PC-9 (cell line): ENCODE measurements at regions of chr6 and their contacts with region 1.

Region 1: DNA sequence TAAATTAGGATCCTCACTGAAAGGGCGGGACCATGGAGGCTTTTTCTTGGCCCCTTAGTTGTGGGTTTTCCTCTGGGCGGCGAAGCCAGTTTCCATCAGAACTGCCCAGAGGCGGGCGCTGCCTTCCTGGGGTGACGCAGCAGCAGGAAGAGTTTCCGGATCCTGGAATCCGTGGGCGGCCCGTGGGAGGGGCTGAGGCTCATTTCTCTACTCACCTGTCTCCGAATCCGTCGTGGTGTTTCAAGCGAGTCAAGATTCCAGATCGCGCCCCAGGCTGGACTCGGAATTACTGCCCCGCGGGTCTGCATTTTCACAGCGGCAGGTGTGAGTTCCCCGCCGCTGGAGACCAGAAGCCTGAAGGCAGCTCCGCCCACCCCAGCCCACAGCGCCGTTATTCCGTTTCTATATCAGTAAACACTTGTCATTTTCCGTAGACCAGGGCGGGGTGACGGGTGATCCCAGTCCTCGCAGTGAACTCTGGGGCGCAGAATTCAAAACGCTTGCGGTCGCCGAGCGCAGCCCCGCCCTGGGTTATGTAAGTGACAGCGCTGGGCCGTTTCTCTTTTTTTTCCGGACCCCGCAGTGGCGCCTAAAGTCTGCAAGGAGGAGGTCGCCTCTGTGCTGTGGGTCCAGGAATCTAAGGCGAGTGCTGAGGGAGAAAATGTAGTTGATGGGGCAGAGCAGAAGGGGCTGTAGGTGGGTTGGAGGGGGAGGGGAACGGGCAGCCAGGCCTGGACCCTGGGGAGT is 27.2 kb upstream of the POU5F1 start:
- DNase-seq: peak; percentile 82 to 88
- H3K4me3 ChIP-seq: peak overlapping the region; percentile 54
- H3K27ac ChIP-seq: peak overlapping the region; percentile 79
- H3K4me1 ChIP-seq: peaks cover 19% of the 10 kb centered on the region
- H3K27me3 ChIP-seq: no peaks in the 10 kb centered on the region
- CTCF ChIP-seq: no peak

Region 2: DNA sequence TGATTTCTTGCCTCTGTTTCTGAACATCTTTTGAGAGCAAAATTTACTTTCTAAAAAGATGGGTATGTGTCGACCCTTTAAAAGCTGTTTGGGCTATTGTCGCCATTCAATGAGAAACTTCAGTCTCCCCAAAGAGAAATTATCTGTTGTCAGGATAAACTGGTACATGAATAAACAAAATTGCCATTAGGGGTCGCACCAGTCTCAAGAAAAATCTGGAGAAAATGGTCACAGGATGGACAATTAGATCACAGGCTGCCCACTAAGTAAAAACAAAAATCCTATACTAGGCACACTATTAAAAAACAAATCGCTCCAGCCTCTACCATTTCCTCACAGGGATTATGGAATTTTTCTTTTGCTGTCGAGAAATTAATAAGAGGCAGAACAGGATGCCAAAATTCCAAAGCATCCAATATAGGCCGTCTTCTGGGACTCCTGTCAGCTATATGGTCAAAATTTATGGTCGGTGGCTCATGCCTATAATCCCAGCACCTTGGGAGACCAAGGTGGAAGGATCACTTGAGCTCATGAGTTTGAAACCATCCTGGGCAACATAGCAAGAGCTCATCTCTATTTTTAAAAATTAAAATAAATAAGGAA is 714.0 kb before region 1 on chr6:
- CTCF ChIA-PET with region 1: no interaction called
- POLR2A ChIA-PET with region 1: no interaction called
- intact Hi-C with region 1: loop called (anchors 5 kb)
- DNase-seq: peak; percentile 45 to 56
- H3K4me3 ChIP-seq: no peak overlapping the region
- H3K27ac ChIP-seq: no peak overlapping the region
- H3K4me1 ChIP-seq: no peaks in the 10 kb centered on the region; the same call in 1 of the 2 replicates
- H3K27me3 ChIP-seq: peaks cover 30% of the 10 kb centered on the region
- CTCF ChIP-seq: peak; percentile 74

Region 3: GRCh38 chr6:31068669-31069340 is 128.9 kb before region 1 on chr6:
- CTCF ChIA-PET with region 1: interaction called, 10 read pairs
- POLR2A ChIA-PET with region 1: no interaction called
- intact Hi-C with region 1: no loop called
- DNase-seq: peak; percentile 61 to 80
- H3K4me3 ChIP-seq: no peak overlapping the region
- H3K27ac ChIP-seq: no peak overlapping the region
- H3K4me1 ChIP-seq: peaks cover 3% of the 10 kb centered on the region; the same call in 1 of the 2 replicates
- H3K27me3 ChIP-seq: no peaks in the 10 kb centered on the region
- CTCF ChIP-seq: peak; percentile 94

Region 4: GRCh38 chr6:31158140-31158862 is 39.4 kb before region 1 on chr6 and contains the start of gene TCF19:
- CTCF ChIA-PET with region 1: interaction called, 3 read pairs
- POLR2A ChIA-PET with region 1: interaction called, 4 read pairs
- intact Hi-C with region 1: loop called (anchors 2 kb)
- DNase-seq: peak; percentile 96 to 100
- H3K4me3 ChIP-seq: peak within 1 kb of the TSS; percentile 89
- H3K27ac ChIP-seq: no peak within 1 kb of the TSS
- H3K4me1 ChIP-seq: peaks cover 16% of the 10 kb centered on the region
- H3K27me3 ChIP-seq: no peaks in the 10 kb centered on the region
- CTCF ChIP-seq: no peak
- total RNA-seq, gene TCF19: 19.0 and 26.0 TPM in 2 replicates

Region 5: GRCh38 chr6:31383149-31383548 is 185.4 kb after region 1 on chr6:
- CTCF ChIA-PET with region 1: no interaction called
- POLR2A ChIA-PET with region 1: no interaction called
- intact Hi-C with region 1: loop called (anchors 5 kb)
- DNase-seq: peak in 1 of 2 experiments; percentile 52
- H3K4me3 ChIP-seq: no peak overlapping the region
- H3K27ac ChIP-seq: no peak overlapping the region
- H3K4me1 ChIP-seq: no peaks in the 10 kb centered on the region
- H3K27me3 ChIP-seq: peaks cover 9% of the 10 kb centered on the region; the same call in 1 of the 2 replicates
- CTCF ChIP-seq: no peak